Sciatic nerve (tissue), 2 donors: ENCODE measurements at regions of chr2 and their contacts with region 1.

Region 1: DNA sequence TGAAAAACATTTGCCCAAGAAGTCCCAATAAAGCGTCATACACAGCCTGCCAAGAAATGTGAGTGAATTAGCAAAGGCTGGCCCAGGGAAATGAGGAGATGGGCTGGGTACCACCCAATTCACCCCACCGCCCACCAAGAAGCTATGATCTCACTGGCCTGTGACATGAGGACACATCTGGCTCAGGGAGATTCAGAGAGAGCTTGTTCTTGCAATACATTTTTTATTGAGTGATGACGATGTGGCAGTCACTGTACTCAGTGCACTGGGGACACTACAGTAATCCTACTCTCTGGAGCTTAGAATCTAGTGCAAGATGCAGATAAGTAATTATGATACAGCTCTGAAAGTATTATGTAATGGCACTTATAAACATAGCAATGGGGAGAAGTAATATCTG is 64.6 kb upstream of the IGFBP2 start:
- DNase-seq: no peak
- ATAC-seq: no peak

Region 2: GRCh38 chr2:216404010-216404618 is 164.5 kb before region 1 on chr2:
- intact Hi-C with region 1: no loop called
- DNase-seq: no peak
- ATAC-seq: peak; percentile 30

Region 3: DNA sequence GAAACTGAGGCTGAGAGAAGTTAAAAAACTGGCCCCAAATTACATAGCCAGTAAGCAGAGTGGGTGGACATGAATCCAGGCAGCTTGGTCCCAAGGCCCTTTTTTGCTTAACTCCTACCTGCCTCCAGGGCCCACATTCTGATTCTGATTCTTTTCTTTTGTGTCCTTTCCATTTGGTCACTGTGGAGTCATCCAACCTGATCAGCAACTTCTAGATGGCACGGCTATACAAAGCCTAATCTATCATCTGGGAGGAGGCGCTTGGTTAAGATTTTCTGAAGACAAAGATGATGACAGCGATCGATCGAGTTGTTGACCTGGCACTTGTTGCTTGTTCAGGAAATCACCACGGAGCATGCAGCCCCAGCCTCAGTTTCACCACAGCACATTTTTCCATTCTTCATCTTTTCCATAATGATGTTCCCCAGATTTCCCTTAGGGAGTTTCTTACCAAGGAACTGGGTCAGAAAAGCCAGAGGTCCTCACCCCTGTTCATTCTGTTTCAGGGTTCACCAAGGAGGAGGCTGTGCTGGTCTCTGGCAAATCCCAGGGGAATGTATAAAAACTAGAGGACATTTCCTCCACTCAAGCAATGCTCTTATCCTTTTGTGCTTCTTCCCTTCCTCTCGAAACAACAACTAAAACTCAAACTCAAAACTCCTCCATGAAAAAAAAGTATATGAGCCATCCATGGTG is 57.8 kb after region 1 on chr2:
- intact Hi-C with region 1: loop called (anchors 2 kb)
- DNase-seq: no peak
- ATAC-seq: no peak

Region 4: DNA sequence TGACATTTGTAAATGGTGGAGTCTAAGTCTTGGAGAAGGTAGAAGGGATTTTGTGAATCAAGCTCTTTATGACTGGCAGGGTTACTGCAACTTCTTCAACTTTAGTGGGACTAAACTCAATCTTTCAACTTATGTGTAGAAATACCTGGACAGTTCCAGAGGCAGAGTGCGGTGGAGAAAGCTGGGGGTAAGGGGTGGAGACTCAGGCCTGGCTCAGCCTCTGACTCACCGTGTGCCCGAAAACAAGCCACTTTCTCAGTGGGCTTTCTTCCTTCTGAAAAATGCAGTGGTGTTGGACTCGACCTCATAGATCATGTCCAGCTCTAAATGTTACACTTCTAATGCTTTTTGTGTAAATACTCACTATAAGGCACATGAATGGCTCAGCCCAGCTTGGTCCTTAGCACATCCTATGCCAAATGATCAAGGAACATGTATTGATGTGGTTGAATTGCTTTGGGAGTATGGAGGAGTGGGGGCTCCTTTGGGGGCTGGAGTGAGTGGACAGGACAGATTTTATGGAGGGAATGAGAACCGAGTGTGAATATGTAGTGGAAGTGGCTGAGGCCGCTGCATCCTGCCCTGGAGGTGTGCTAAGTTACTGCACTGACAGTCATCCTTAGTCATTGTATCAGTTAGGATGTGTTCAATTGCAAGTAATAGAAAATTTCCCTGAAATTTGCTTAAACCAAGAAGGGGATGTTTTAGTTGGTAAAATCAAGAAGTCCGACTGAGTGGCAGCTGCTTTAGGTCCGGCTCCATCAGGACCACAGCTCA is 159.0 kb after region 1 on chr2:
- intact Hi-C with region 1: no loop called
- DNase-seq: no peak
- ATAC-seq: no peak

Region 5: DNA sequence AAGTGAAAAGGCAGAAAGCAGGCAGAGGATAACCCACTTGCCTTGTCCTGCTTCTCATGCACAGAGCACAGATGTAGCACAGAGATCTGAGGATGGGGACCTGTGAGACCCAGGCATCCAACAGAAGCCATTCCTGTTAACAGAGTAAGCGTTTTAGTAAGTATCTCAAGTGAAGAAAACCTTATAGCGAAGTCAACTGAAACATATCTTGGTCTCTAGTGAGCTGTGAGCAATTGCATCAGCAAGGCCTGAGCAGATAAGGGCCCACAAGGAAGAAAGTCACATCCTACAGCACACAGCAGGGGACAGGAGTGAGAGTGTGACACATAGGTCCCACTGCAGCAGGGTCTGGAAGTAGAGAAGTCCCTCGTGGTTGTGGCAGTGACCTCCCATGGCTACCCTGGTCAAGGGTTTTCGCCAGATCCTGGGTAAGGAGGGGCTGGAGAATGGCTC is 540.0 kb after region 1 on chr2:
- intact Hi-C with region 1: no loop called
- DNase-seq: no peak
- ATAC-seq: peak; percentile 28